Tibial artery (tissue), 4 donors: ENCODE measurements at regions of chr3 and their contacts with region 1.

Region 1: GRCh38 chr3:105686278-105686897 is 182.4 kb downstream of the CBLB start:
- DNase-seq: no peak
- H3K4me3 ChIP-seq: no peak overlapping the region
- H3K27ac ChIP-seq: no peak overlapping the region
- H3K4me1 ChIP-seq: no peaks in the 10 kb centered on the region
- H3K27me3 ChIP-seq: no peaks in the 10 kb centered on the region
- CTCF ChIP-seq: peak; percentile 40 to 73

Region 2: GRCh38 chr3:105836533-105836932 is 150.1 kb after region 1 on chr3:
- intact Hi-C with region 1: no loop called
- DNase-seq: no peak
- H3K4me3 ChIP-seq: no peak overlapping the region
- H3K27ac ChIP-seq: peak overlapping the region; percentile 4 to 46
- H3K4me1 ChIP-seq: peaks cover 0 to 34% (median 5%) of the 10 kb centered on the region in 4 donors
- H3K27me3 ChIP-seq: no peaks in the 10 kb centered on the region
- CTCF ChIP-seq: no peak

Region 3: DNA sequence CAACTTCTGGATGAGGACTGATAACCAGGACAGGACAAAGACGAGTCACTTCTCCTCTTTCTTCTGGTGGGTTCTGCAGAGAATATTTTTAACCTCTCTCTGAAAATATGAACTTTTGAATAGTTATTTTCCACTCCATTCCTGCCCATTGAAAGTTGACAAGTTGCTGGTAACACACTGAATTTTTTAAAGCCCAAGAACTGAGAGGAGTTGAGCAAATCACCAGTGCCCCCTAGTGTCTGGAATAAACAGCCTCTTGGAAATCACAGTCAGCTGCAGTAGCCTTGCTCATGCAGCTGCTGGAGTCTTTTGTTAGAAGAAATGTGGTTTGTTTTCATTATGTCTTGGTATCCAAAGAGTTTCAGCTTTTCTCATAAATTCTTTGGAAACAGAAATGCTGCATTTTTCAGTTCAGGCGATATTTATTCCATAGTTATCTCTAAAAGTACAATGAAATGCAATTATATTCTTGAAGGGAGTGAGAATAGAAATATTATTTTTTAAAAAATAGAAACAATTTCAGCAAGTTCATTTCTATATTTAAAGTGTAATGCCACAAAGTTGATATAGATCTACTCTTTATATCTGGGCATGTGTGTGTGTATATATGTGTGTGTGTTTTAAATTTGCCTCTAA is 923.4 kb after region 1 on chr3:
- intact Hi-C with region 1: loop called (anchors 5 kb)
- DNase-seq: peak; percentile 54 to 74
- H3K4me3 ChIP-seq: no peak overlapping the region
- H3K27ac ChIP-seq: no peak overlapping the region
- H3K4me1 ChIP-seq: peaks cover 0 to 4% (median 0%) of the 10 kb centered on the region in 4 donors
- H3K27me3 ChIP-seq: no peaks in the 10 kb centered on the region
- CTCF ChIP-seq: peak; percentile 80 to 83